Gastrocnemius medialis (tissue), 4 donors: ENCODE measurements at regions of chr5 and their contacts with region 1.

Region 1: GRCh38 chr5:150700594-150701293 is at the start of gene RBM22:
- DNase-seq: peak; percentile 91 to 93
- ATAC-seq: peak; percentile 98
- H3K4me3 ChIP-seq: peak within 1 kb of the TSS; percentile 67 to 98 (median 98)
- H3K27ac ChIP-seq: peak within 1 kb of the TSS; percentile 89 to 99 (median 98)
- H3K4me1 ChIP-seq: peaks cover 13 to 14% of the 10 kb centered on the region in 2 donors
- H3K27me3 ChIP-seq: no peaks in the 10 kb centered on the region
- CTCF ChIP-seq: peak; percentile 52 to 84 (median 59)
- POLR2A ChIP-seq: peak; percentile 82 to 91
- total RNA-seq, gene RBM22: 22.5 to 31.0 (median 26.2) TPM

Region 2: DNA sequence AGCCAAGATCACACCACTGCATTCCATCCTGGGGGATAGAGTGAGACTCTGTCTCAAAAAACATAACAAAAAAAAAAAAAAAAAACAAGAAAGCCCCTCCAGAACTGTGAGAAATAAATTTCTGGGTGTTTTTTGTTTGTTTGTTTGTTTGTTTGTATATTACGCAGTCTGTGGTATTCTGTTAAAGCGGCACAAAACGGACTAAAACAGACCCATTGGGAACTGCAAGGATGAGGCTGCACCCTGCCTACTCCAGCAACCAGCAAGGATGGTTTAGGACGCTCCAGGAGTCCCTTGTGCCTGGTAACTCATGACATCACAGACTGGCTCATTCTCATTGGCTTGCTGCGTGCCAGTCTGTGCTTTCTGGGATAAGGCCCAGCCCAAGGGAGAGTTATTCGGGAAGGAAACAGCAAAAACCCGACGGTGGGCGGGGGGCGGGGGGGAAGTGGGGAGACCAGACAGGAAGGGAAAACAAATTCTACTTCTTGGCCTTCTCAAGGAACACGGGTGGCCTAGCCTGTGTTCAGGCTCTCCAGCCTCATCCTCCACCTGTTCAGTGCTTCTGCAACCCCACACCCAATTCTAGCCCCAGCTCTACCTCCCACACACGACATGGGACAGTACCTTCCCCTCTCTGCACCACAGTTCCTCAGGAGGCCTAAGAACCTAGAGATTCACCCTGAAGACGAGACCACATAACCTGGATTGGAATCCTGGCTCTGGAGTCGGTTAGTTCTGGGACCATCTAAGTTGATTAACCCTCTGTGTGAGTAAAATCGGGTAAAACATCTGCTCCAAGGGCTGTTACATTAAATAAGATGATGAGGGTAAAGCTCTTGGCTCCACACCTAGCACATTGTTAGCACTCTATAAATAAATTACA is 290.9 kb before region 1 on chr5:
- in situ Hi-C with region 1: no loop called
- intact Hi-C with region 1: no loop called
- DNase-seq: peak; percentile 68 to 73
- ATAC-seq: peak; percentile 89 to 93
- H3K4me3 ChIP-seq: peak overlapping the region; percentile 8 to 56 (median 48)
- H3K27ac ChIP-seq: peak overlapping the region; percentile 63 to 83 (median 78)
- H3K4me1 ChIP-seq: peaks cover 6 to 10% of the 10 kb centered on the region in 2 donors
- H3K27me3 ChIP-seq: no peaks in the 10 kb centered on the region
- CTCF ChIP-seq: no peak
- POLR2A ChIP-seq: no peak

Region 3: DNA sequence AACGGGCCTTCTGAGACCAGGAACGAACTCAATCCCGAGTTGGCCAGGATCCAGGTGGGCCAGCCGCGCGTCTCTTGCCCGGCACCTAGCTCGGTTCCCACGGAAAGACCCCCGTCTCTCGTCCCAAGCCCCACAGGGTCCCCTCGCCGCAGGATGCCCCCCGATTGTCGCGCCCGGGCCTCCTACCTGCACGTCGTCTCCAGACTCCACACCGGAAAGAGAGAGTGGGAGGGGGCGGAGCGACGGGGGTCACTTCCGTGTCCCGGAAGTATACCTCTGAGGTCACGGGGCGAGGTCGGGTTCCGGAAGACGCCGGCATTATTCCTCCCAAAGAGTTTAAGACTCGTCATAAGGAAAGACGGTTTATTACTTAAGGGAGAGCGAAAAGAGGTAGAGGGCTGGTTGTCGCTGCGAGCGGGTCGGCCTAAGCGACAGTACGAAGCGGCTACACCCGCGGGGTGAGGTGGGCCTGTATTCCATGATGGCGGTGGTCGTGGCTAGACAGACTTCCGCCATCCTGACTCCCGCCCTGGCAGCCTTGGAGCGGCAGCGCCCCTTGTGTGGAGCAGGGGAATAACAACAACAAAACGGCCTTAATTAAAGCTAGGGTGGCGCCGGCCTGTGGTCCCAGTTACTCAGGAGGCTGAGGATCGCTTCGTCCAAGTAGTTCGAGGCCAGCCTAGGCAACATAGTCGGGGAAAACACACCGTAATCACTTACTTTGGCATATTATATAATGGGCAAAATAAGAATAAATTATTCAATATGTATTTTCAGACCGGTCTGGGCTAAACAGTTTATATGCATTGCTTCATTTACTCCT is 251.0 kb before region 1 on chr5 and contains the start of gene RPS14:
- in situ Hi-C with region 1: loop called in 2 of 4 experiments (anchors 25 kb)
- intact Hi-C with region 1: loop called (anchors 10 kb)
- DNase-seq: peak; percentile 89 to 92
- ATAC-seq: peak; percentile 97
- H3K4me3 ChIP-seq: peak within 1 kb of the TSS; percentile 70 to 97 (median 86)
- H3K27ac ChIP-seq: peak within 1 kb of the TSS; percentile 92 to 95 (median 94)
- H3K4me1 ChIP-seq: peaks cover 13 to 17% of the 10 kb centered on the region in 2 donors
- H3K27me3 ChIP-seq: no peaks in the 10 kb centered on the region
- CTCF ChIP-seq: peak; percentile 85 to 96 (median 93)
- POLR2A ChIP-seq: peak; percentile 83 to 88
- total RNA-seq, gene RPS14: 1,865 to 2,215 (median 2,024) TPM

Region 4: DNA sequence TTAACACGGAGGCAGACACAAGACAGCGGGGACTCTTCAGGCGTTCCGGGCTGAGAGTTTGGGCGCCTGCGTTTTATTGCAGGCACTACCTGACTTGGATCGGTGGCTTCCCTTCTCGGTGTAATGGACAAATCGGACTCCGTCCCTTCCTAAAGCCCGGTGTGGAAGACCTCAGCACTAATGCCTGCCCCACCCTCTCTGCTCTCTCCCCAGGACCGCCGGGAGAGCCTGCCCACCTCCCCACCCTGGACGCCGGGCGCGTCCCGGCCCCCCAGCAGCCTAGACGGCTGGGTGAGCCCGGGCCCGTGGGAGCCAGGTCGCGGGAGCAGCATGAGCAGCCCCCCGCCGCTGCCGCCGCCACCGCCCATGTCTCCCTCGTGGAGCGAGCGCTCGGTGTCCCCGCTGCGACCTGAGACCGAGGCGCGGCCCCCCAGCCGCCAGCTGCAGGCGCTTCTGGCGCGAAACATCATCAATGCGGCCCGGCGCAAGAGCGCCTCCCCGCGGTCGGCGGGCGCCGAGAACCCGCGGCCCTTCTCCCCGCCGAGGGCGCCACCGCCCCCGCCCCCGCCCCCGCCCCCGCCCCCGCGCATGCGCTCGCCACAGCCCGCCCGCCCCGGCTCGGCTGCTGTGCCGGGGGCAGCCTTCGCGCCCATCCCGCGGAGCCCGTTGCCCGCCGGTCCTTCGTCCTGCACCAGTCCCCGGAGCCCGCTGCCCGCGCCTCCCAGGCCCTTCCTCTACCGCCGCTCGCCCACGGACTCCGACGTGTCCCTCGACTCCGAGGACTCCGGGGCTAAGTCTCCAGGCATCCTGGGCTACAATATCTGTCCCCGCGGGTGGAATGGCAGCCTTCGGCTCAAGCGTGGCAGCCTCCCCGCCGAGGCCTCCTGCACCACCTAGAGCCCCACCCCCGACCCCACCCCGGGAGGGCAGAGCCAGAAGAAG is 44.3 kb before region 1 on chr5:
- in situ Hi-C with region 1: no loop called
- intact Hi-C with region 1: loop called (anchors 5 kb)
- DNase-seq: peak in 1 of 2 donors; percentile 78
- ATAC-seq: peak; percentile 35 to 39
- H3K4me3 ChIP-seq: peak overlapping the region; percentile 55 to 79 (median 68)
- H3K27ac ChIP-seq: peak overlapping the region; percentile 99 to 100 (median 99)
- H3K4me1 ChIP-seq: peaks cover 64 to 74% of the 10 kb centered on the region in 2 donors
- H3K27me3 ChIP-seq: no peaks in the 10 kb centered on the region
- CTCF ChIP-seq: peak; percentile 48 to 92 (median 83)
- POLR2A ChIP-seq: peak; percentile 56 to 67

Region 5: GRCh38 chr5:150734579-150735384 is 34.0 kb after region 1 on chr5:
- in situ Hi-C with region 1: no loop called
- intact Hi-C with region 1: no loop called
- DNase-seq: peak; percentile 10 to 39
- ATAC-seq: peak in 1 of 2 donors; percentile 54
- H3K4me3 ChIP-seq: no peak overlapping the region
- H3K27ac ChIP-seq: peak overlapping the region in 3 of 4 donors; percentile 10 to 42 (median 24)
- H3K4me1 ChIP-seq: peaks cover 30 to 33% of the 10 kb centered on the region in 2 donors
- H3K27me3 ChIP-seq: no peaks in the 10 kb centered on the region
- CTCF ChIP-seq: no peak
- POLR2A ChIP-seq: no peak

Region 6: GRCh38 chr5:150758531-150759333 is 58.0 kb after region 1 on chr5 and contains the start of gene DCTN4:
- in situ Hi-C with region 1: no loop called
- intact Hi-C with region 1: loop called (anchors 2 kb)
- DNase-seq: peak; percentile 97 to 98
- ATAC-seq: peak; percentile 95 to 98
- H3K4me3 ChIP-seq: peak within 1 kb of the TSS; percentile 68 to 75 (median 71)
- H3K27ac ChIP-seq: peak within 1 kb of the TSS; percentile 95 to 97 (median 96)
- H3K4me1 ChIP-seq: peaks cover 16 to 30% of the 10 kb centered on the region in 2 donors
- H3K27me3 ChIP-seq: no peaks in the 10 kb centered on the region
- CTCF ChIP-seq: peak in 2 of 5 experiments; percentile 35 to 56
- POLR2A ChIP-seq: peak; percentile 48 to 71
- total RNA-seq, gene DCTN4: 66.6 to 92.6 (median 72.8) TPM

Region 7: GRCh38 chr5:150846654-150847333 is 146.1 kb after region 1 on chr5:
- in situ Hi-C with region 1: loop called in 1 of 4 experiments (anchors 25 kb)
- intact Hi-C with region 1: loop called (anchors 10 kb)
- DNase-seq: peak; percentile 9 to 17
- ATAC-seq: peak; percentile 74 to 84
- H3K4me3 ChIP-seq: no peak overlapping the region
- H3K27ac ChIP-seq: no peak overlapping the region
- H3K4me1 ChIP-seq: peaks cover 0 to 3% of the 10 kb centered on the region in 2 donors
- H3K27me3 ChIP-seq: no peaks in the 10 kb centered on the region
- CTCF ChIP-seq: peak; percentile 33 to 68 (median 59)
- POLR2A ChIP-seq: no peak